Activated CD4-positive, alpha-beta T cell treated with anti-CD3 and anti-CD28 coated beads for 36 hours (primary cell): ENCODE measurements at regions of chr3 and their contacts with region 1.

Region 1: GRCh38 chr3:187319699-187320302 is 28.3 kb upstream of the MASP1 start:
- DNase-seq: peak; percentile 78
- ATAC-seq: peak; percentile 88
- H3K4me3 Mint-ChIP-seq: no peak overlapping the region
- H3K27ac Mint-ChIP-seq: no peak overlapping the region
- H3K4me1 Mint-ChIP-seq: peaks cover 8% of the 10 kb centered on the region
- H3K27me3 Mint-ChIP-seq: peaks cover 30% of the 10 kb centered on the region

Region 2: GRCh38 chr3:187340578-187340977 is 20.8 kb after region 1 on chr3:
- CTCF ChIA-PET with region 1: interaction called, 10 read pairs
- POLR2A ChIA-PET with region 1: interaction called, 5 read pairs
- intact Hi-C with region 1: no loop called
- DNase-seq: no peak
- ATAC-seq: no peak
- H3K4me3 Mint-ChIP-seq: no peak overlapping the region
- H3K27ac Mint-ChIP-seq: no peak overlapping the region
- H3K4me1 Mint-ChIP-seq: no peaks in the 10 kb centered on the region
- H3K27me3 Mint-ChIP-seq: peaks cover 12% of the 10 kb centered on the region

Region 3: DNA sequence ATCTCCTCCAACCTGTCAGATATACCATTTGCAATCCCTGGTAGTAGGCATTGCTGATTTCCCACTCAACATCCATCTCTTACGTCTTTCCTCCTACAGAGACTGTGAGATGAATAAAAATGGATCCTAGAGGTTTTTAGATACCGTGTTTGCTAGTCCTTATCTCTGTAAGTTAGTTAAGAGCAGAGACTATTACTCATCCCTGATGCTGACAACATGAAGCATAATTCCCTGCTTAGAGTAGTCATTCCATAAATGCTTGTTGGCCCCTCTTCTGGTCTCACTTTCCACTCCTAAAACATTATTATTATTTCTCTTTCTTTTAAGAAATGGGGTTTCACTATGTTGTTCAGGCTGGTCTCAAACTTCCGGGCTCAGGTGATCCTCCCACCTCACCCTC is 184.6 kb after region 1 on chr3:
- CTCF ChIA-PET with region 1: no interaction called
- POLR2A ChIA-PET with region 1: no interaction called
- intact Hi-C with region 1: loop called in 1 of 2 experiments (anchors 5 kb)
- DNase-seq: no peak
- ATAC-seq: no peak
- H3K4me3 Mint-ChIP-seq: no peak overlapping the region
- H3K27ac Mint-ChIP-seq: no peak overlapping the region
- H3K4me1 Mint-ChIP-seq: no peaks in the 10 kb centered on the region
- H3K27me3 Mint-ChIP-seq: peaks cover 15% of the 10 kb centered on the region

Region 4: DNA sequence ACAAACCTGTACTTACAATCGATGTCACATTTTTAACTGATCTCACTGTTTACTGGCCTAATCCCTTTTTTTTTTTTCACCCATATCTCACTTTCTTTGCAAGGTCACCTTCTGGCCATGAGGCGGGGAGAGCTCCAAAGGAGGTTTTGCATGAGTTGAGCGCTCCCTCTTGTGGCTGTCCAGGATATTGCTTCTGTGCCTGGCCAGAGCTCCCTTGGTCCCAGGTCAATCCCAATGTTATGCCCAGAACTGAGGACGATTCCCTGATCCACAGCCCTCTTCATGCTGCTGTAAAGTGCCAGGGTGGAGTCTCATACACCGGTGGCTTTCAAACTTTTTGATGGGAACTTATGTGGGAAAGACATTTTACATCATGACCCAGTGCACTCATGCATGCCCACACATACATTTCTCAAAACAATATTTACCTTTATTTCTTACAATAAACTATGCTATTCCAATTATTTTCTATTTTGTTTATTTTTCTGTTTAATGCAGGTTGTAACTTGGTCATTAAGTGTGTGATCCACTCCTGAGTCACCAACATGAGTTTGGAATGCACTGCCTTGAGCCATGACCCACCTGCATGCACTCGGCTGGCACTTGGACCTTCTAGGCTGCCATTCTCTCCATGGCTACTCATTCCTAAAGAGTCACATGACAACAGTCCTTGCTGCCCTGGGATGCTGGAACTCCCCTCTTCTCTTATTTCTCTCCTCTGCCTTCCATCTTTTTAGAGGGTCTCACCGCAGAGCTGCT is 360.0 kb after region 1 on chr3:
- CTCF ChIA-PET with region 1: interaction called, 349 read pairs
- POLR2A ChIA-PET with region 1: interaction called, 4 read pairs
- intact Hi-C with region 1: loop called (anchors 1 kb)
- DNase-seq: peak; percentile 83
- ATAC-seq: peak; percentile 63
- H3K4me3 Mint-ChIP-seq: no peak overlapping the region
- H3K27ac Mint-ChIP-seq: no peak overlapping the region
- H3K4me1 Mint-ChIP-seq: peaks cover 7% of the 10 kb centered on the region
- H3K27me3 Mint-ChIP-seq: peaks cover 43% of the 10 kb centered on the region

Region 5: DNA sequence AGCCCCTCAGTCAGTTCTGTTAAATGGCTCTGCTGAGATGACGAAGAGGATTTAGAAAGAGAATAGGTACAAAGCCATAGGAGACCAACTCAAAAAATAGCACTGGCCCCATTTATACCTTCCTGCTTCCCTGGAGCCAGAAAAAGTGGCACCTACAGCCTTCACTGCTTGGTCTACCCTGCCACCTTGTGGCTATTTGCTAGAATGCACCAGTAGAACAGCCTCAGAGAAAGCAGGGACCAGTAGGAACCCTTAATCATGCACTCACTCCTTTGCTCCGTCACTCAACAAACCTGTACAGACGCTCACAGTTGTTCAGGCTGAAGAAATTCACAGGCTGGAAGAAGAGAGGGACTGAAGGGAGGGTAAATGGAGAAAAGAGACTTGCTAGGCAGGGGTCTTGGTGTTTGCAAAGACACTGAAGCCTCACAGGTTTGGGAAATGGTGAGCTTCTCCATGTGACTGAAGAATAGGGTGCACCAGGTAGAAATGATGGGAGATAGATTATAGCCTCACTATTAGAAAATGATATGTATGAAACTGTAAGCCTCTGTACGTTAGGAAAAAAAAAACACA is 394.7 kb after region 1 on chr3:
- CTCF ChIA-PET with region 1: interaction called, 81 read pairs
- POLR2A ChIA-PET with region 1: no interaction called
- intact Hi-C with region 1: loop called (anchors 1 kb)
- DNase-seq: peak; percentile 82
- ATAC-seq: peak; percentile 80
- H3K4me3 Mint-ChIP-seq: no peak overlapping the region
- H3K27ac Mint-ChIP-seq: no peak overlapping the region
- H3K4me1 Mint-ChIP-seq: peaks cover 12% of the 10 kb centered on the region
- H3K27me3 Mint-ChIP-seq: no peaks in the 10 kb centered on the region